ENCODE measurements at regions of chr6 and their contacts with region 1.

Region 1: GRCh38 chr6:50816115-50816675 is 2.5 kb upstream of the TFAP2B start:
- DNase-seq: peak; percentile 83
- H3K4me3 Mint-ChIP-seq: peak overlapping the region; percentile 87
- H3K27ac Mint-ChIP-seq: peak overlapping the region; percentile 55
- H3K4me1 Mint-ChIP-seq: peaks cover 15% of the 10 kb centered on the region
- H3K27me3 Mint-ChIP-seq: peaks cover 66% of the 10 kb centered on the region
- CTCF ChIP-seq: peak; percentile 80

Region 2: DNA sequence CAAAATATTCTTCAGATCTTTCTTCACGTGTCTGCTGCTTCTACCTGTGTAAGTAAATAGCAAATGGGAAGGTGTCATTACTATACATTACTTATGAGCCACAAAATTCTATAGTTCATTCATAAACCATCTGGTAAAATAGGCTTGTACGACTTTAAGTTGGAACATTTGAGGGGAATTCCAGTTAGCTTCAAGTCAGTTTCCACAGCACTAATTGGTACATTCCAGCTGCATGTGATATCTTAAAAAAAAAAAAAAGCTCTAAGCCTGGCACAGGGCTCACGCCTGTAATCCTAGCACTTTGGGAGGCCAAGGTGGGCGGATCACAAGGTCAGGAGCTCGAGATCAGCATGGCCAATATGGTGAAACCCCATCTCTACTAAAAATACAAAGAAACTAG is 20.6 kb before region 1 on chr6:
- CTCF ChIA-PET with region 1: no interaction called
- POLR2A ChIA-PET with region 1: no interaction called
- intact Hi-C with region 1: no loop called
- DNase-seq: no peak
- H3K4me3 Mint-ChIP-seq: no peak overlapping the region
- H3K27ac Mint-ChIP-seq: no peak overlapping the region
- H3K4me1 Mint-ChIP-seq: no peaks in the 10 kb centered on the region
- H3K27me3 Mint-ChIP-seq: peaks cover 33% of the 10 kb centered on the region
- CTCF ChIP-seq: no peak

Region 3: DNA sequence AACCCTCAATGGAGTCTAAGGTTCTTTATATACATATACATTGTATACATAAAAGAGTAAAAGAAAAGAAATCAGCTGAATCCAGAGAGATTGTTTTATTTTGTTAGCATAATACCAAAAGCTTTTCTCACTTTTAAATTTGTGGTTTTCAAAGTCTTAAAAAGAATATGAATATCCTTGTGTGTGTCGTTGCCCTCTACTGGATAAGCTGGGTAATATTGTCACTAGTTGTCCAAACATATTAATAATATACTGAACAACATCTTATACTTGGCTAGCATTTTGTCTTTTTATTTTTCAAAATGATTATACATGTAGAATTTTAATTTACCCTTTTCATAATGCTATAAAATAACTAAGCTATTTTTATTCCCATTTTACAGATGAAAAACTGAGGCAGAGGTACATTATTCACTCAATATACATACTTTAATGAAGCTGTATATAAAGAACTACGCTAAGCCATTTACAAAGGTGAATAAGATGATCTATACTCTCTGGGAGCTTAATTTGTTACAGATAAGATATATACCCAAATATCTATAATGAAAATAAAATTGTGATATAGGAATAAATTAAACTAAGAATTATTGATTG is 534.2 kb after region 1 on chr6:
- CTCF ChIA-PET with region 1: interaction called, 7 read pairs
- POLR2A ChIA-PET with region 1: no interaction called
- intact Hi-C with region 1: loop called (anchors 1 kb)
- DNase-seq: peak; percentile 30
- H3K4me3 Mint-ChIP-seq: no peak overlapping the region
- H3K27ac Mint-ChIP-seq: no peak overlapping the region
- H3K4me1 Mint-ChIP-seq: peaks cover 6% of the 10 kb centered on the region
- H3K27me3 Mint-ChIP-seq: no peaks in the 10 kb centered on the region
- CTCF ChIP-seq: peak; percentile 46

Region 4: GRCh38 chr6:51541847-51542246 is 725.7 kb after region 1 on chr6:
- CTCF ChIA-PET with region 1: interaction called, 28 read pairs
- POLR2A ChIA-PET with region 1: interaction called, 3 read pairs
- intact Hi-C with region 1: loop called (anchors 1 kb)
- DNase-seq: peak; percentile 36
- H3K4me3 Mint-ChIP-seq: no peak overlapping the region
- H3K27ac Mint-ChIP-seq: no peak overlapping the region
- H3K4me1 Mint-ChIP-seq: peaks cover 7% of the 10 kb centered on the region
- H3K27me3 Mint-ChIP-seq: peaks cover 16% of the 10 kb centered on the region
- CTCF ChIP-seq: peak; percentile 48

Region 5: DNA sequence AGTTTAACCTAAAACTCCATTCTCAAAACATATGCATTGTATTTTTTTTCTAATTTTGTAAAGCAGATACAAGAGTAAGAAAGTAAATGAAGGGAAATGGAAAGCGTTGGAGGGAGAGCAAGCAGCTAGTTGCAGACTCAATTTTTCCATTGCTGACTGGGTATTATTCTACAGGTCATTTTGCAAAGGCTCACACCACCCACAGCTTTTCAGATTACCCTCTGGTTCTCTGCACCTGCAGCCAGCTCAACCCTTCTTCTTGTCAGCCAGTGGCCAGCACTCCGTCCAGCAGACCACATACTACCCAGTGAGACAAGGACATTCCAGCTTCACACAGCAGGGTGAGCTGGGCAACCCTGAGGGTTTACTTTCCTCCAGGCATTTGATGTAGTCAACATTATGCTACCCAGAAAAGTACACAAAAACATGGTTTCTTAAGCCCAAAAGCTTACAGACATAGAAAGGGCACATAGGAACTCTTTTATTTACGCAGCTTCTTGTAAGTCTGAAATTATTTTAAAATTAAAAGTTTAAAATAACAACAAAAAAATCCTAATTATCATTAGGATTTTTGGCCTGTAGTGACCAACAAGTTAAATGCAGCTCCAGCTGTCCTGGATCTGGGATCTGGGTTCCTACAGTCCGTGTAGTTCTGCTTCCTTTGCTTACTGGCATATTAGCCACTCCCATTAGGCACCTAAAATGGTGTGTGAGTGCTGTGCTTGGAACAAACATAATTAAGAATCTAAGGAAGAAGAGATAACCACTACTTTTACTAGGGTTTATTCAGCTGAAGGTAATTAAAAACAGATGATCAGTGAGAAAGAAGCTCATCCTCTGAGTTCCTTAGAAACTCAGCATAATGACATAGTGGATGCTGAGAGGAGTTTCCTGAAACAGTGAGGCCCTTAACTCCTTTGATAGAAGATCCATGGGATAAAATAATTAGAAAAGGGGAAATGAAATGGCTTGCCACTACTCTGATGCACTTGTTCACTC is 1085.9 kb after region 1 on chr6:
- CTCF ChIA-PET with region 1: no interaction called
- POLR2A ChIA-PET with region 1: no interaction called
- intact Hi-C with region 1: no loop called
- DNase-seq: no peak
- H3K4me3 Mint-ChIP-seq: no peak overlapping the region
- H3K27ac Mint-ChIP-seq: no peak overlapping the region
- H3K4me1 Mint-ChIP-seq: no peaks in the 10 kb centered on the region
- H3K27me3 Mint-ChIP-seq: no peaks in the 10 kb centered on the region
- CTCF ChIP-seq: no peak

Region 6: GRCh38 chr6:51959744-51960383 is 1143.7 kb after region 1 on chr6:
- CTCF ChIA-PET with region 1: interaction called, 6 read pairs
- POLR2A ChIA-PET with region 1: no interaction called
- intact Hi-C with region 1: loop called (anchors 1 kb)
- DNase-seq: peak; percentile 82
- H3K4me3 Mint-ChIP-seq: no peak overlapping the region
- H3K27ac Mint-ChIP-seq: no peak overlapping the region
- H3K4me1 Mint-ChIP-seq: no peaks in the 10 kb centered on the region
- H3K27me3 Mint-ChIP-seq: peaks cover 55% of the 10 kb centered on the region
- CTCF ChIP-seq: peak; percentile 90

Measured in MCF 10A (cell line).